ENCODE measurements at regions of chr17 and their contacts with region 1.

Region 1: DNA sequence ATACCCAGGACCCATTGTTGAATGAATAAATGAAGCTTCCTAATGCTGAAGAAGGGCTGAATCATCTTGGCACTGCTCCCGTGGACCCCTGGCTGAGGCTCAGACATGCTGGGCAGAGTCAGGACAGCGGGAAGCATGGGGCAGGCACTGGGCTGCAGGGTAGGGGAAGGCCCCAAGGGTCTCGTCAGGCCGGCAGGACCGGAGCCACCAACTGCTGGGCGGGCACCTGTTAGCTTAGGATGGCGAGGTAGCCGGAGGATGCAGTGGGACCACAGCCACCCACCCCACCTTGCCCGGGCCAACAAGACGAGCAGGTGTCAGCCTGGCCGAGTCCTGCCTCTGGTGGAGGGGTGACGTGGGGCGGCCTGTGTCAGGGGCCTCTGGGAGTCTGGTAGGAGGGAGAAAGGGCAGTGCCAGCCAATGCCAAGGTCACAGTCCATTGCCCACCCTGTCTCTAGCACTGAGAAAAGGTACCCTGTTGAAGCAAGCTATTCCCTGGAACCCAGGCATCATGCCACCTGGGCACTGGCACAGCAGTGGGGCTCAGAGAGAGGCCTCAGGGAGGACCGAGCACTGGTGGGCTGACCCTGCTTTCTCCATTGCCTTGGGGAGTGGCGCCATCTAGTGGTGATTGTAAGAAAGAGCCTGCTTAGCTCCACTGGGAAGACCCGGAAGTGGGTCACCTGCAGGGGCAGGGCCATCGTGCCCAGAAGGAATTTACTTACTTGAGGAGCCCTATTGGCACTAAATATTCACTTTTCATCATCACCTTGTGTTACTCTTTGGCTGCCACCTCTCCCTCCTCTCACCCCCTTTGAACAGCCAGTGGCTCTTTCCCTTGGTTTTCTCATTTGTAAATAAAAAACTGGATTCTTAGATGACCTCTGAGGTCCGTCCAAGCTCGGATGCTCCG is 3.0 kb upstream of the DLX3 start:
- DNase-seq: peak; percentile 95
- H3K4me3 Mint-ChIP-seq: no peak overlapping the region
- H3K27ac Mint-ChIP-seq: no peak overlapping the region
- H3K4me1 Mint-ChIP-seq: peaks cover 20% of the 10 kb centered on the region
- H3K27me3 Mint-ChIP-seq: peaks cover 67% of the 10 kb centered on the region

Region 2: DNA sequence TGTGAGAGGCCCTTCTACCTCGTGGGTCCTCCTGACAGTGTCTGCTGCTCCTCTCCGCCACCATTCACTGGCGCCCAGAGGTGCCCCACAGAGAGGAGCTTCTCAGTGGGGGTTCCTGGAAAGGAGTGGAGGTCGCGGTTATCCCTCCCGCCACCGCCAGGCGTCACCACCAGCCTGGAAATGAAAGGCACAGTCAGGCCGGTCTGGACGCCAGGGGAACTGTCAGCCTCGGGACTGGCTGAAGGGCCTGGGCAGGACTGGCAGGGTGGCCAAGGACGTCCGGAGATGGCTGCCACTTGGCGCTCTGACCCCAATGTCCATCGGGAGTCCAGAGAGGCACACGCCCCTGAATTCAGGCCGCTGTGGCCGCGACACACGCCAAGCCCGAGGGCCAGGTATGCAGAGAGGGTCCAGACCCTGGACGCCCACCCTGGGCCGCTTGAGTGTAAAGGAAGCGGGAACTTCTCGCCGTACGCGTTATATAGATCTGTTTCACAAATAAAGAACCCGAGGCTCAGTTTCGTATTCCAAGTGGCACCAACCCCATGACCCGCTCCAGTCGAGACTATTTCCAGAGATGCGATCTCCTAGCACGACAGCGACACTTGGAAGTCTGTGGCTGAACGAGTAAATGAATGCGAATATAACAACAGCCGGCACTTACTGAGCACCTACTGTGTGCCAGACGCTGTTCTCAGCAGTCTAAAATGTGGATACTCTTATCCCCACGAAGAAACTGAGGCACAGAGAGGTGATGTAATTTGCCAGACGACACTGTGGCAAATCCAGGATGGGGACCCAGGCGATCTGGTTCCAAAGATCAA is 430.0 kb before region 1 on chr17:
- intact Hi-C with region 1: loop called (anchors 1 kb)
- DNase-seq: peak; percentile 95
- H3K4me3 Mint-ChIP-seq: peak overlapping the region; percentile 70
- H3K27ac Mint-ChIP-seq: no peak overlapping the region
- H3K4me1 Mint-ChIP-seq: peaks cover 32% of the 10 kb centered on the region
- H3K27me3 Mint-ChIP-seq: peaks cover 35% of the 10 kb centered on the region

Region 3: DNA sequence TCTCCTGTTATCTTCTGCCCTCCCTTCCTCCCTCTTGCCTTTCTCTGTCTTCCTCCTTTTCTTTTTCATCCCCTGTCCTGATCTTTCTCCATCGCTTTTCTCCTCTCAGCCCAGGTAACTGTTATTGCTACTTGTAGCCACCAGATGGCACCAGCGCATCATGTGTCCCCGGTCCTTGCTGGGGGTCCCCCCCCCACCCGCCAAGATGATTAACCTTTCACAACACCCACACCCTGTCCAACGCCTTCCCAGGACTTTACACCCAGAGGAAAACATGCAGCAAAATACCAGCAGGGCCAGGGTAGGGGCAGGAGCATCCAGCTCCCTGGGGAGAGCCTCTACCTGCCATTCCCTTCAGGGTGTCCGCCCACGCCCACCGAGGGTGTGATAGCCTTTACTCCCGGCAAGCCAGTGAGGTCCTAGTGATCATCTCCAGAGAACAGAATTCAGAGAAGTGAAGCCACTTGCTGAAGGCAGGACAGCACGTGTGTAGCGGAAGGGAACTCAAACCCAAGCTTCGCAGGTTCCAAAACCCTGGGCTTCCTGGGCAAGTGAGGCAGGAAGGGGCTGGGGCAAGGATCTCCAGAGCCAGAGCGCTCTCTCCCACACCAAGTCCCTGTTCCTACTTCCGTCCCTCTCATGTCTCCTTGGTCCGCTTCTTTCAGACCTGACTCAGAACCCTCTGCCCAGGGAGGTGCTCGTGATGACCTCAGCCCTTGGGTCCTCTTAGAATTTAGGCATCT is 136.7 kb before region 1 on chr17:
- intact Hi-C with region 1: loop called (anchors 1 kb)
- DNase-seq: peak; percentile 81
- H3K4me3 Mint-ChIP-seq: no peak overlapping the region
- H3K27ac Mint-ChIP-seq: no peak overlapping the region
- H3K4me1 Mint-ChIP-seq: peaks cover 3% of the 10 kb centered on the region
- H3K27me3 Mint-ChIP-seq: peaks cover 10% of the 10 kb centered on the region

Region 4: DNA sequence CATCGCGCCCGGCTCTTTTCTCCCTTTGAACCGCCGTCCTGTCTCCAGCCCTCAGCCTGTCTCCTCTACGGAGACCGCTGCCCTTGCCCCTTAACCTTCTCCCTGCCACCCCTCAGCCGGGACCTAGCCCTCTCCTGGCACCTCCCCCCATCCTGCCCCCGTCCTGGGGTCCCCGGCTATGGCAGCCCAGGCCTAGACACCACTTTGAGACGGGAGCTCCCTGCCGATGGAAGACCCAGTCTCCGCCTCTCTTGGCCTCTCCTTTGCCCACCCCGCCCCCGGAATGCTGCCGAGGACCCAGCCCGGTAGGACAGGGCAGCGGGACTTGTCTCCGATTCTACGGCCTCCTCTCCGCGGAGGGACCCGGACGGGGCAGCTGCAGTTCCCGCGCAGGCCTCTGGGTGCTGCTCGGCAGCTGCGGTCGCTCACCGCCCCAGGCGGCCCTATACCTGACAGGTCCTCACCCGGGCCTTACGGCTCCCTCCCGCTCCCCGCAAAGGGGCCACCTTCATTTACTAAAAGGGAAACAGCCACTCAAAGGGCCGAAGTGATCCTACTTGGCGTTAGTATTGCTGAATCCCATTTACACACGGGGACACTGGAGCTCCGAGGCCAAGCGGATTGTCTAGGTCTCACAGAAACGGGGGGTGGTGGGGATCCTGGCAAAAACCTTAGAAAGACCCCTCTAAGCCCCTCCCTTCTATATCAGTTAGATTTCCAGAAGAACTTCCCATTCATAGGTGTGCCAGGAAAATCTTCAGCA is 117.6 kb before region 1 on chr17:
- intact Hi-C with region 1: loop called (anchors 1 kb)
- DNase-seq: peak; percentile 92
- H3K4me3 Mint-ChIP-seq: peak overlapping the region; percentile 54
- H3K27ac Mint-ChIP-seq: no peak overlapping the region
- H3K4me1 Mint-ChIP-seq: peaks cover 3% of the 10 kb centered on the region
- H3K27me3 Mint-ChIP-seq: peaks cover 35% of the 10 kb centered on the region

Region 5: GRCh38 chr17:49952209-49952911 is 45.7 kb before region 1 on chr17:
- intact Hi-C with region 1: loop called (anchors 1 kb)
- DNase-seq: peak; percentile 94
- H3K4me3 Mint-ChIP-seq: no peak overlapping the region
- H3K27ac Mint-ChIP-seq: no peak overlapping the region
- H3K4me1 Mint-ChIP-seq: no peaks in the 10 kb centered on the region
- H3K27me3 Mint-ChIP-seq: peaks cover 42% of the 10 kb centered on the region

Region 6: DNA sequence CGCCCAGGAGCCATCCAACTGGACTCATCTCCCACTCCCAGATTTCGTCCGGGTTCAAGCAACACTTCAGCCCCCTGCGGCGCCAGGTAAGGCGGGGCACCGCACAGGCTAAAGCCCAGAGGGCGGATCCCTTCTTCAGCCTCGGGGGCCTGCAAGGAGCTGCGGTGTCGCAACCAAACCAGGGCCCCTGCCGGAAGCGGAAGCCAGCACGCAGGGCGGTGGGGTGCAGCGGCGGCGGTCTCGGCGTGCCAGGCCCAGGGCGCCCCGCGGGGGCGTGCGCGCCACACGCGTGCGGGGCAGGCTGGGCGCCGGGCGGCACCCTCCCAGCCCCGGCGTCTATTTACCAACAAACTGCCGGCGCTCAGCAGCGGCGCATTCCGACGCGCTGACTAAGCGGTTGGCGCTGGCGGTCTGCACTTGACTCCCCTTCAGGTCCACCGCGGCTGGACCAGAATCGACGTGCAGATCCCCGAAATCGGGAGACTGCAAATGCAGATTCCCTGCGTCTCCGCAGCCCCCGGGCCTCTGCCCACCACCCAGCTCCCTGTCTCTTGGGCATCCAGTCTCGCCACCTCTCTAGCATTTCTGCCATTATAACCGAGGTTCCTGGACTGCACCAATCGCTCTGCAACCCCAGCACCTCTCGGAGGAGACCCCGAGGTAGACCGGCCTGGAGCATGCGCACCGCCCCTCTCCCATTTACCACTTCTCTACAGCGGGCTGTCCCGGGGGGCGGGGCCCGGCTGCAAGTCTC is 29.5 kb before region 1 on chr17:
- intact Hi-C with region 1: loop called (anchors 1 kb)
- DNase-seq: peak; percentile 89
- H3K4me3 Mint-ChIP-seq: peak overlapping the region; percentile 87
- H3K27ac Mint-ChIP-seq: peak overlapping the region; percentile 56
- H3K4me1 Mint-ChIP-seq: peaks cover 30% of the 10 kb centered on the region
- H3K27me3 Mint-ChIP-seq: peaks cover 90% of the 10 kb centered on the region

Region 7: DNA sequence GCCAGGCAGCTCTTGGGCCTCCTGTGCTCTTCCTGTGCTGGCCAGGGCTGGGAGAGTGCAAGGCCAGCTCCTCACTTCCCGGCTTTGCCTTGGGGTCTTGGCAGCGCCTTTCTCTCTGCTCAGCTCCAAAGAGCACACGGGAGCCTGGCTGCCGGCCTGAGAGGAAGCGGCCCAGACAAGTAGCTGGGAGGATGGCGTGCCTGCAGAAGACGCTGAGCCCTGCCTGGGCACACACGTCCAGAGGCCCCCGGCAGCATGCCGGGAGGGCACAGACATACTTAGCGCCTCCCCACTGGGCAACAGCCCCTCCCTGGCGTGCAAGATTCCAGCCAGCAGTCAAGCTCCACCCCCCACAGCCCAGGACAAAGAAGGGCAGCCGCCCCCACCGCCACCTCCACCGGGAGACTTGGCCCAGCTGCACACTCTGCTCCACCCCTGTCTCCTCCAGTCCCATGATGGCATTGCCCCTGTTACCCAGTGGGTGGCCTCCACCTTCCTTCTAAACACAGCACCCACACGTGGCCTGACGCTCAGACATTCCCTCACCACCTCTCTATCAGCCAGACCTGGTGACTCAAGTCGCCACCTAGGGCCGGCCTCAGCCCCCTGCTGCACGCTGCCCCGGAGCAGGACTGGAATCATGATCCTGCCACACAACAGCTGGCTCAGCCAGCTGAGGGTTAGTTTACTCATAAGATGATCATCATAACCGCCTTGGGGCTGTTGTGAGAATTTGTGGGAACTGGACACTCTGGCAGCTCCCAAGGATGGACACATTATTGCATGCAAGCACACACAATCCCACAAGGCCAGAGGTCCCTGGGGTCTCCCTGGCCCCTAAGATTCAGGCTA is 180.2 kb after region 1 on chr17:
- intact Hi-C with region 1: no loop called
- DNase-seq: peak; percentile 77
- H3K4me3 Mint-ChIP-seq: peak overlapping the region; percentile 33
- H3K27ac Mint-ChIP-seq: peak overlapping the region; percentile 77
- H3K4me1 Mint-ChIP-seq: peaks cover 11% of the 10 kb centered on the region
- H3K27me3 Mint-ChIP-seq: peaks cover 5% of the 10 kb centered on the region